HepG2 (cell line): ENCODE measurements at regions of chr19 and their contacts with region 1.

Region 1: GRCh38 chr19:13880059-13881043 is 3.4 kb downstream of the NANOS3 start:
- DNase-seq: peak; percentile 85
- ATAC-seq: peak; percentile 80
- H3K4me3 ChIP-seq: peak overlapping the region in 2 of 3 experiments; percentile 50 to 74; a peak in 5 of 6 replicates
- H3K27ac ChIP-seq: peak overlapping the region; percentile 11
- H3K4me1 ChIP-seq: peaks cover 44% of the 10 kb centered on the region
- H3K27me3 ChIP-seq: peaks cover 0 to 8% of the 10 kb centered on the region in 2 experiments; a peak in 2 of 5 replicates
- CTCF ChIP-seq: peak; percentile 99
- EP300 ChIP-seq: peak in 1 of 2 experiments; percentile 13; a peak in 1 of 4 replicates
- POLR2A ChIP-seq: 0 out of 4 replicates have a peak, but pooled peaks of 1 of the 2 experiments have one; percentile 30
- RAD21 ChIP-seq: peak; percentile 100

Region 2: DNA sequence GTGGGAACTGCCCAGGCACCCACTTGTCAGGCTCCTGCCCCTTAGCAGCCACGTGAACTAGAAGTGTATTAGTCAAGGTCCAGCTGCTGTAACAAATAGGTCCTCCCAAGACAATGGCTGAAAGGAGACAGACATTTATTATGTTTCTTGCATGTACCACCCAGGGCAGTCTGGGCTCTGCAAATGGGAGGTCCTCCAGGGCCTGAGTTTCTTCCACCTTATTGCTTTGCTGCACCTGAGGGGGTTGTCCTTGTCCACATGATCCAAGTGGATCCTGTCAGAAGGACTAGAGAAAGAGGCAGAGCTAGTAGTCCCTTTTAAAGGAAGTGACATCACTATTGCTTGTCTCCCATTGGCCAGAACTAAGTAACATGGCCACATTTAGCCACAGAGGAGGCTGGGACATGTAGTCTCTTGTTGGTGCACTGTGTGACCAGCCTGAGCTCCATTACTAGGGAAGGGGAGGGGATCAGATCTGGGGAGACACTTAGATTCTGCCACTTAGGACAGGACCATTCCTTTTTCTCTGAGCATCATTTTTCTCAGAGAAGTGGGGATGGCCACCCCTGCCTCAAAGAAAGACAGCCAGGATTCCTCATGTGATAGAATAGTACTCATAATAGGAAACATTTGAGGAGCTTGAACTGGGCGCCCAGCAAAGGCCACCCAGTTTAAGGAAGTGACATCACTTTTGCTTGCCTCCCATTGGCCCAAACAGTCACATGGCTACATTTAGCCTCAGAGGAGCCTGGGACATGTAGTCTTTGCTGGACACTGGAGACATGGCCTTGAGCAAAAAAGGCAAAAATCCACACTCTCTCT is 40.8 kb after region 1 on chr19:
- CTCF ChIA-PET with region 1: no interaction called
- POLR2A ChIA-PET with region 1: no interaction called
- in situ Hi-C with region 1: no loop called
- intact Hi-C with region 1: no loop called
- DNase-seq: peak; percentile 57
- ATAC-seq: peak; percentile 78
- H3K4me3 ChIP-seq: no peak overlapping the region
- H3K27ac ChIP-seq: no peak overlapping the region
- H3K4me1 ChIP-seq: no peaks in the 10 kb centered on the region
- H3K27me3 ChIP-seq: no peaks in the 10 kb centered on the region
- CTCF ChIP-seq: no peak
- EP300 ChIP-seq: no peak
- POLR2A ChIP-seq: no peak
- RAD21 ChIP-seq: no peak

Region 3: GRCh38 chr19:13952154-13953035 is 72.0 kb after region 1 on chr19 and contains the start of gene DCAF15:
- CTCF ChIA-PET with region 1: no interaction called
- POLR2A ChIA-PET with region 1: no interaction called
- in situ Hi-C with region 1: loop called (anchors 5 kb)
- intact Hi-C with region 1: loop called (anchors 2 kb)
- DNase-seq: peak; percentile 98
- ATAC-seq: peak; percentile 98
- H3K4me3 ChIP-seq: peak within 1 kb of the TSS; percentile 92 to 98 (median 95)
- H3K27ac ChIP-seq: peak within 1 kb of the TSS; percentile 68
- H3K4me1 ChIP-seq: peaks cover 10% of the 10 kb centered on the region
- H3K27me3 ChIP-seq: no peaks in the 10 kb centered on the region; a peak in 1 of 5 replicates
- CTCF ChIP-seq: no peak
- EP300 ChIP-seq: no peak
- POLR2A ChIP-seq: peak; percentile 58 to 64
- RAD21 ChIP-seq: no peak
- total RNA-seq, gene DCAF15: 8.5 and 14.0 TPM in 2 replicates

Region 4: GRCh38 chr19:14031719-14032480 is 151.5 kb after region 1 on chr19 and contains the start of gene IL27RA:
- CTCF ChIA-PET with region 1: interaction called, 3 read pairs
- POLR2A ChIA-PET with region 1: no interaction called
- in situ Hi-C with region 1: no loop called
- intact Hi-C with region 1: loop called (anchors 1 kb)
- DNase-seq: peak; percentile 46
- ATAC-seq: peak; percentile 81
- H3K4me3 ChIP-seq: peak within 1 kb of the TSS; percentile 62 to 80 (median 76)
- H3K27ac ChIP-seq: peak within 1 kb of the TSS; percentile 32
- H3K4me1 ChIP-seq: peaks cover 23% of the 10 kb centered on the region
- H3K27me3 ChIP-seq: peaks cover 0 to 19% of the 10 kb centered on the region in 2 experiments; a peak in 3 of 5 replicates
- CTCF ChIP-seq: peak; percentile 85
- EP300 ChIP-seq: no peak
- POLR2A ChIP-seq: peak; percentile 30 to 34; a peak in 1 of 4 replicates
- RAD21 ChIP-seq: peak; percentile 65
- total RNA-seq, gene IL27RA: 3.4 and 8.1 TPM in 2 replicates

Region 5: DNA sequence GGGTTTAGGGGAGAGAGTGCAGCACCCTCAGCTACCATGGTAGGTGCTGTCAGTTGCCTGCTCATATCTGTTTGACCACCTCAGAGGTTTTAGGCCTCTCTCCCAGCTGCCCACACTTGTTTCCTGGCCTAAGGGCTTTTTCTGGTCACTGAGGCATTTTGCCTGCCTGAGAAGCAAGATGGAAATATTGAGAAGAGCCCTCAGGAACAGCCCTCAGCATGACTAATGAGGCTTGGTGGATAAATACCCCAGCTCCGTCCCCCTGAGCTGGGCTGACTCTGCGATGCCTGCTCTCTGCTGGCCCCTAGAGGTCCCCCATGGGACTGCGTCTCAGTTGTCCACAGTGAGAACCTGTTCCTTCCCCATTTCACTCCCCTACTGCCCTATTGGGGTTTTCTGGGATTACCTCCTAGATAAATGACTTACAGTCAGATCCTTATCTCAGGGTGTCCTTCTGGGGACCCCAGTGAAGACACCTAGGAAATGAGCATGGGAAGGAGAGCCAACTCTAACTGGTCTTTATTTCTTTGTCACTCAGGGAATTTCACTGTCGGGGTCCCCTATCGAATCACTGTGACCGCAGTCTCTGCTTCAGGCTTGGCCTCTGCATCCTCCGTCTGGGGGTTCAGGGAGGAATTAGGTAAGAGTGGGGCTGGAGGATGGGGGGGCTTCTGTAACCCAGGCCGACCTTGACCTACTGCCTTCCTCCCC is 168.2 kb after region 1 on chr19:
- CTCF ChIA-PET with region 1: interaction called, 13 read pairs
- POLR2A ChIA-PET with region 1: interaction called, 3 read pairs
- in situ Hi-C with region 1: no loop called
- intact Hi-C with region 1: loop called (anchors 1 kb)
- DNase-seq: peak; percentile 23
- ATAC-seq: peak; percentile 72
- H3K4me3 ChIP-seq: no peak overlapping the region
- H3K27ac ChIP-seq: no peak overlapping the region
- H3K4me1 ChIP-seq: no peaks in the 10 kb centered on the region
- H3K27me3 ChIP-seq: no peaks in the 10 kb centered on the region
- CTCF ChIP-seq: peak; percentile 72
- EP300 ChIP-seq: no peak
- POLR2A ChIP-seq: no peak
- RAD21 ChIP-seq: peak; percentile 41

Region 6: GRCh38 chr19:14073261-14073924 is 193.0 kb after region 1 on chr19:
- CTCF ChIA-PET with region 1: interaction called, 79 read pairs
- POLR2A ChIA-PET with region 1: interaction called, 5 read pairs
- in situ Hi-C with region 1: loop called (anchors 5 kb)
- intact Hi-C with region 1: loop called (anchors 1 kb)
- DNase-seq: no peak
- ATAC-seq: peak; percentile 46
- H3K4me3 ChIP-seq: peak overlapping the region; percentile 76 to 94 (median 80)
- H3K27ac ChIP-seq: peak overlapping the region; percentile 91
- H3K4me1 ChIP-seq: peaks cover 8% of the 10 kb centered on the region
- H3K27me3 ChIP-seq: no peaks in the 10 kb centered on the region; a peak in 2 of 5 replicates
- CTCF ChIP-seq: peak; percentile 32
- EP300 ChIP-seq: no peak
- POLR2A ChIP-seq: no peak
- RAD21 ChIP-seq: peak; percentile 75

Region 7: DNA sequence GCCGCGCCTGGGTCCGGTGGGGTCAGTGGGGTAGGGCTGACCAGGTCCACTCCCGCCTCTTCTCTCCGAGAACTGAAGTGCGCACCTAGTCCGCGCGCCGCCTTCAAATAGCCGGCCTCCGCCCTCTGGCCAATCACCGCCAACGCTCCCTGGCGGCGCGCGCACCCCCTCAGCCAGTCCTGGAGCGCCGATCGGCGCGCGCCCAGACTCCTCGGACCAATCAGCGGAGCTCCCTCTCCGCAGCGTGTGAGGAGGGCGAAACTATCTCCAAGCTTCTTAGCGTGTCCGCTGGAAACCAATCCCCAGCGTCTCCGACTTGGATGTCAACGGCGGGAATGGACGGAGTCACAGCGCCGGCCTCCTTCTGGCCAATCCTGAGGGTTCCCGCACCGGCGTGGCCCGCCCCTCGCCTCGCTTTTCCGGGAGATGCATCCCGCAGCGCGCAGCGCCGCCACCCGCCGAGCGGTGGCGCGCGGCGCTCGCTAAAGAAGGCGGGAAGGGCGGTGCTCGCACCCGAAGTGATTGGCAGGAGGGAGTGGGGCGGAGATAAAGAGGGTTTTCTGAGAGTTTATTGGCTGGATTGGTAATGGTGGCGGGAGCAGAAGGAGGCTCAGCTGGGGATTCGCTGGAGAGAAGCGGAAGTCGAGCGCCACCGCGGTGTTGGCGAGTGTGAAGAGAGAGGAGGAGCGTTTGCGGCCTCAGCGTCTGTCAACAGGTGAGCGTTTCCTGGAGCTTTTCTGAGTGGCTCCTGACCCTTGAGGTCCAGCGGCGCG is 256.3 kb after region 1 on chr19 and contains the start of gene ASF1B:
- CTCF ChIA-PET with region 1: no interaction called
- POLR2A ChIA-PET with region 1: interaction called, 3 read pairs
- in situ Hi-C with region 1: no loop called
- intact Hi-C with region 1: loop called (anchors 1 kb)
- DNase-seq: peak; percentile 99
- ATAC-seq: peak; percentile 91
- H3K4me3 ChIP-seq: peak within 1 kb of the TSS; percentile 72 to 90 (median 82)
- H3K27ac ChIP-seq: peak within 1 kb of the TSS; percentile 94
- H3K4me1 ChIP-seq: peaks cover 43% of the 10 kb centered on the region
- H3K27me3 ChIP-seq: no peaks in the 10 kb centered on the region
- CTCF ChIP-seq: peak; percentile 93
- EP300 ChIP-seq: 0 out of 4 replicates have a peak, but pooled peaks of 1 of the 2 experiments have one; percentile 20
- POLR2A ChIP-seq: peak; percentile 93 to 98
- RAD21 ChIP-seq: peak; percentile 89
- total RNA-seq, gene ASF1B: 21.9 and 24.8 TPM in 2 replicates

Region 8: DNA sequence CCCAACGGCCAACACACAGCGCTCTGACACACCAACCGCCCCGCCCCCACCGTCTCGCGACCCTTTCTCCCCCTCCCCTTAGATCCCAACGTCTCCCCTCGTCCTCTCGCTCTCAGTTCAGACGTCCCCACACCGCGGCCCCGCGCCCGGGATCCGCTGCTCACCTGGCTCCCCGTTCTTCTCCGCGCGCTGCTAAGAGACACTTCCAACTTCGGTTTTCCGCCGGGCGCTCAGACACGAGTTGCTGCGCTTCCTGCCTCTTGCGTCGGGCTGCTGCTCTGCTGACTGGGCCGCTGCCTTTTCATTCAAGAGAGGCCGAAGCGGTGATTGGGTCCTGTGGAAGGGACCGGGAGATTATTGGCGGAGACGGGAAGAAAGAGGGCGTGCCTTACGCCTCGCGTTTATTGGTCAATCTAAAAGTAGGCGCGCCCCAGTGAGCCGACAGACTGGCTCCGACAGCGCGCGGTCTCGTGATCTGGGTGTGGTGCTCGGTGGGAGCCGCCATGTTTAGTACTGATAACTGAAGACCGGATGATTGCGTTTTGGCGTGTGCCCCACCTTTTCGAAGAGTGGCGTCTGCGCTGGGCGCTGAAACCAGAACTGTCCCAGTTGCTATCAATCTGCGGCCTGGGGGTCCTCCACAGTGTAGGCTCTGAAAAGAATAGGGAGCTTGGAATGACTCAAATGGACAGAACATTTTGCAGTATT is 538.9 kb after region 1 on chr19 and contains the start of gene DDX39A:
- CTCF ChIA-PET with region 1: no interaction called
- POLR2A ChIA-PET with region 1: no interaction called
- in situ Hi-C with region 1: loop called (anchors 25 kb)
- intact Hi-C with region 1: no loop called
- DNase-seq: peak; percentile 99
- ATAC-seq: peak; percentile 97
- H3K4me3 ChIP-seq: peak within 1 kb of the TSS; percentile 80 to 88 (median 87)
- H3K27ac ChIP-seq: peak within 1 kb of the TSS; percentile 88
- H3K4me1 ChIP-seq: peaks cover 34% of the 10 kb centered on the region
- H3K27me3 ChIP-seq: no peaks in the 10 kb centered on the region
- CTCF ChIP-seq: no peak
- EP300 ChIP-seq: peak in 1 of 2 experiments; percentile 12; a peak in 1 of 4 replicates
- POLR2A ChIP-seq: peak; percentile 62 to 69
- RAD21 ChIP-seq: 0 out of 2 replicates have a peak, but pooled peaks have one; percentile 15
- total RNA-seq, gene DDX39A: 90.4 and 98.1 TPM in 2 replicates